ENCODE measurements at regions of chrX and their contacts with region 1.

Region 1: DNA sequence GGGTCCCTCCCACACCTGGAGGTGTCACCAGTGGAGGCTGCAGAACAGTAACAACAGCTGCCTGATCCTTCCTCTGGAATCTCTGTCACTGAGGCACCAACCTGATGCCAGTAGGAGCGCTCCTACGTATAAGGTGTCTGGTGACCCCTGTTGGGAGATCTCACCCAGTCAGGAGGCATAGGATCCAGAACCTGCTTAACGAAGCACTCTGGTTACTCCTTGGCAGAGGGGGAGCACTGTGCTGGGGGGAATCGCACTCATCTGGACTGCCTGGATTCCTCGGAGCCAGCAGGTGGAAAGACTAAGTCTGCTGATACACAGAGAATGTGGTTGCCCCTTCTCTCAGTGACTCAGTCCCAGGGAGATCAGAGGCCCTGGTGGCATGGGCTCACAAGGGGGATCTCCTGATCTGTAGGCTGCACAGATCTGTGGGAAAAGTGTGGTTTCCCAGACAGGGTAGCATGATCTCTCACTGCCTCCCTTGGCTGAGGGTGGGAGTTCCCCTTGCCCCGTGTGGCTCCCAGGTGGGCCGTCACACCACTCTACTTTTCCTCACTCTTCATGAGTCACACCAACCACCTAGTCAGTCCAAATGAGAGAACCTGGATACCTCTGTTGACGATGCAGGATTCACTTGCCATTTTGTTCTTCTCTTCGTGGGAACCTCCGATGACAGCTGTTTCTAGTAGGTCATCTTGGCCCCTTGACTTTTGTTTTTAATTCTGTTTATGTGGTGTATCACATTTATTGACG is 305.9 kb downstream of the IDS start:
- DNase-seq: no peak
- H3K4me3 Mint-ChIP-seq: no peak overlapping the region
- H3K27ac Mint-ChIP-seq: peak overlapping the region; percentile 76
- H3K4me1 Mint-ChIP-seq: peaks cover 15% of the 10 kb centered on the region
- H3K27me3 Mint-ChIP-seq: no peaks in the 10 kb centered on the region

Region 2: GRCh38 chrX:149267878-149268813 is 69.0 kb after region 1 on chrX:
- intact Hi-C with region 1: loop called (anchors 1 kb)
- DNase-seq: no peak
- H3K4me3 Mint-ChIP-seq: no peak overlapping the region
- H3K27ac Mint-ChIP-seq: peak overlapping the region; percentile 0
- H3K4me1 Mint-ChIP-seq: peaks cover 9% of the 10 kb centered on the region
- H3K27me3 Mint-ChIP-seq: no peaks in the 10 kb centered on the region

Measured in activated T-helper 2 cell treated with anti-CD3 and anti-CD28 coated beads, Interferon-gamma antibody, Interleukin-2, Interleukin-4, amounts not matched to agents 10 μg/mL and 5 μg/mL and 100 μg/mL, durations not matched to agents 14 hours and 24 hours and 36 hours (primary cell).